CD4-positive, alpha-beta memory T cell (primary cell): ENCODE measurements at regions of chr6 and their contacts with region 1.

Region 1: GRCh38 chr6:157756708-157757429 is 66.2 kb upstream of the SNX9 start:
- DNase-seq: peak; percentile 74 to 80 (median 76)
- H3K4me3 ChIP-seq: no peak overlapping the region
- H3K4me3 Mint-ChIP-seq: peak overlapping the region in 5 of 8 donors; percentile 6 to 64 (median 39)
- H3K27ac ChIP-seq: no peak overlapping the region
- H3K27ac Mint-ChIP-seq: peak overlapping the region; percentile 11 to 88 (median 73)
- H3K4me1 ChIP-seq: peaks cover 43% of the 10 kb centered on the region
- H3K4me1 Mint-ChIP-seq: peaks cover 28 to 74% (median 40%) of the 10 kb centered on the region in 4 donors
- H3K27me3 ChIP-seq: peaks cover 5% of the 10 kb centered on the region
- H3K27me3 Mint-ChIP-seq: peaks cover 6 to 7% of the 10 kb centered on the region in 2 donors

Region 2: GRCh38 chr6:157211603-157212455 is 545.0 kb before region 1 on chr6:
- CTCF ChIA-PET with region 1: no interaction called
- POLR2A ChIA-PET with region 1: no interaction called
- intact Hi-C with region 1: no loop called
- DNase-seq: no peak
- H3K4me3 ChIP-seq: no peak overlapping the region
- H3K4me3 Mint-ChIP-seq: no peak overlapping the region
- H3K27ac ChIP-seq: no peak overlapping the region
- H3K27ac Mint-ChIP-seq: peak overlapping the region in 3 of 7 donors; percentile 37 to 84 (median 70)
- H3K4me1 ChIP-seq: no peaks in the 10 kb centered on the region
- H3K4me1 Mint-ChIP-seq: peaks cover 0 to 4% (median 0%) of the 10 kb centered on the region in 4 donors
- H3K27me3 ChIP-seq: no peaks in the 10 kb centered on the region
- H3K27me3 Mint-ChIP-seq: no peaks in the 10 kb centered on the region

Region 3: DNA sequence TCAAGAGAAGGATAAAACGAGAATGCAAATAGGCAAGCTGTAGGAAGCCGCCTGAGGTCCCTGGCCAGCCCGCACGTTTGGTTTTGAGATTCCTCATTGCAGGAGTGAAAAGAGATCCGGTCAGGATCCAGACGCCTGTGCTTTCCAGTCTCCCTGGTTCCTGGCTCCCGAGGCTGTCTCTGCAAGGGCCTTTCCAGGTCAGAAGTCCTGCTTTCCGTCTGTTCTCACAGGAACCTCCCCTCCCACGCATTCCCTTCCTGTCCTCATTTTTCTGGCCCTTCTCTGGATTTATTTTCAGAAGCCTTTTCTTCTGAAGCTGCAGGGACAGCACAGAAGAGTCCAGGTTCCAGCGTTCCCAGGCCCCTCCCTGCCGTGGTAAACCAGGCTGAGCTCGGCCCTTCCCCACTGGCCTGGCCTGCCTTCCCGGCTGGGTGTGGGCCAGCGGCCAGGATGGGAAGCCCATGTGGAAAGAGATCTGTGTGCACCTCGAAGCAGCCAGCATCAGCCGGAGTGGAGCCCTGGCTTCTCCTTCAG is 487.5 kb before region 1 on chr6:
- CTCF ChIA-PET with region 1: no interaction called
- POLR2A ChIA-PET with region 1: no interaction called
- intact Hi-C with region 1: no loop called
- DNase-seq: no peak
- H3K4me3 ChIP-seq: no peak overlapping the region
- H3K4me3 Mint-ChIP-seq: no peak overlapping the region
- H3K27ac ChIP-seq: no peak overlapping the region
- H3K27ac Mint-ChIP-seq: no peak overlapping the region
- H3K4me1 ChIP-seq: peaks cover 7% of the 10 kb centered on the region
- H3K4me1 Mint-ChIP-seq: peaks cover 2 to 14% (median 8%) of the 10 kb centered on the region in 4 donors
- H3K27me3 ChIP-seq: no peaks in the 10 kb centered on the region
- H3K27me3 Mint-ChIP-seq: peaks cover 0 to 3% of the 10 kb centered on the region in 2 donors

Region 4: DNA sequence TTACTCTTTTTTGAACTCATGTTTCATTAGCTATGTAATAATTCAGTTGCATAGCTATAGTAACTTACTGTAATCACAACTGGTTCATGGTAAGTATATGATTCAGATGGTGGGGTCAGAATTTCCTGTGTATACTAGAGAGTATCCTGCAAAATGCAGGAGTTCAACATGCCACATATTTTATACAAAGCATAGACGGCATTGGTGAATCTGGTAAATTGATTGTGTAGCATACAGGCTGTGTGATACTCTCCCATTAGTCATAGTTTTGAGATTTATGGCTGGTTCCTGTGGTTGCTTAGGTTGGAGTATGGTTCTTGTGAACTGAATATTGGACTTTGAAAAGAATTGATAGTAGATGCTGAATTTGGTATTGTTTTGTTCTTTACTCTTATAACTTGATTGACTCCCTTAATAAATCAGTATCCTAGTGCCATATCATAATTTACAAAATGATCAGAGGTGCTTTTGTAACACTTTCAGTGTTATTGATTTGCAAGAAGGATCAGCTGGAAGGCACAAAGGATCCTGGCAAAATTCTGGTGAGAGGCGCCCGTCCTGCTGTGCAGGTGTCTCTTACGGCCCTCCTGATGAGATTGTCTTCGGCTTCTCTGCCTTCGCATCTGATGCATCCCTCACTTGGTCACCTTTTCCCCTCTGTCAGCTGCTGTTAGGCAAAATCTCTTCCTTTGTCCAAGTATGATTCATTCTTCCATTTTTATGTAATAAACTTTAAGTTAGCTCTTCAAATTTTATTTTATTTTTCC is 88.8 kb after region 1 on chr6:
- CTCF ChIA-PET with region 1: interaction called, 22 read pairs
- POLR2A ChIA-PET with region 1: no interaction called
- intact Hi-C with region 1: no loop called
- DNase-seq: no peak
- H3K4me3 ChIP-seq: no peak overlapping the region
- H3K4me3 Mint-ChIP-seq: peak overlapping the region in 2 of 8 donors; percentile 8 to 23
- H3K27ac ChIP-seq: no peak overlapping the region
- H3K27ac Mint-ChIP-seq: peak overlapping the region in 2 of 7 donors; percentile 18 to 38
- H3K4me1 ChIP-seq: peaks cover 19% of the 10 kb centered on the region
- H3K4me1 Mint-ChIP-seq: peaks cover 35 to 75% (median 56%) of the 10 kb centered on the region in 4 donors
- H3K27me3 ChIP-seq: no peaks in the 10 kb centered on the region
- H3K27me3 Mint-ChIP-seq: no peaks in the 10 kb centered on the region

Region 5: DNA sequence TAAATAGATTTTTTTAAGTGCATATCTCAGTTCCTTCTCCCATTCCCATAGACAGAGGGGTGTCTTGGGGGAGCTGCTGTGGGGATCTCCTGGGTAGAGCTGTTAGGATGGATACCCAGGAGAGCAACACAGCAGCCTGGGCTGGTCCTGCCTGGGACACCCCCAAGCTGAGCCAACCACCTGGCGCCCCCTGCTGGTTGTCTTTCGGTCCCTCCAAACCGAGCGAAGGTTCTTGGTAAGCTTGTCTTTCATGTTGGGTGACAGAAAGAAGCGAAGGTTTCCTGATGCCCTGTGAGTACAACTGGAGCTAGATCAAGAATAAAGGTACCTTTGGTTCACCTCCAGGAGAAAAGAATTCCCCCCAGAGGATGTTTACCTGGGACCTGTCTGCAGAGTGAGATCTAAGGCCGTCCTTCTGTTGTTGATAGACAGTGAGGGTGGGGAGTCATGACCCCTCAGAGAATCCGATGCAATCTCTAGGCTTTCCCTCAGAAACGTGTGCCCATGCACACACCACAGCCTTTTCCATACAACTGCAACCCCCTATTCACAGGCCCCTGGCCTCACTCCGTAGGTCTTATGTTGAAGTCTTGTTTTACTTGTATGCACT is 117.0 kb after region 1 on chr6:
- CTCF ChIA-PET with region 1: interaction called, 314 read pairs
- POLR2A ChIA-PET with region 1: interaction called, 17 read pairs
- intact Hi-C with region 1: loop called (anchors 1 kb)
- DNase-seq: peak; percentile 72 to 76 (median 75)
- H3K4me3 ChIP-seq: no peak overlapping the region
- H3K4me3 Mint-ChIP-seq: peak overlapping the region in 1 of 8 donors; percentile 40
- H3K27ac ChIP-seq: no peak overlapping the region
- H3K27ac Mint-ChIP-seq: peak overlapping the region in 5 of 7 donors; percentile 65 to 77 (median 75)
- H3K4me1 ChIP-seq: peaks cover 9% of the 10 kb centered on the region
- H3K4me1 Mint-ChIP-seq: peaks cover 6 to 21% (median 12%) of the 10 kb centered on the region in 4 donors
- H3K27me3 ChIP-seq: no peaks in the 10 kb centered on the region
- H3K27me3 Mint-ChIP-seq: no peaks in the 10 kb centered on the region

Region 6: GRCh38 chr6:157946865-157947532 is 190.1 kb after region 1 on chr6:
- CTCF ChIA-PET with region 1: interaction called, 19 read pairs
- POLR2A ChIA-PET with region 1: no interaction called
- intact Hi-C with region 1: no loop called
- DNase-seq: peak in 2 of 5 donors; percentile 11 to 14
- H3K4me3 ChIP-seq: no peak overlapping the region
- H3K4me3 Mint-ChIP-seq: no peak overlapping the region
- H3K27ac ChIP-seq: no peak overlapping the region
- H3K27ac Mint-ChIP-seq: peak overlapping the region in 2 of 7 donors; percentile 48 to 71
- H3K4me1 ChIP-seq: no peaks in the 10 kb centered on the region
- H3K4me1 Mint-ChIP-seq: no peaks in the 10 kb centered on the region
- H3K27me3 ChIP-seq: no peaks in the 10 kb centered on the region
- H3K27me3 Mint-ChIP-seq: peaks cover 0 to 1% of the 10 kb centered on the region in 2 donors

Region 7: GRCh38 chr6:158072083-158072721 is 315.3 kb after region 1 on chr6:
- CTCF ChIA-PET with region 1: interaction called, 38 read pairs
- POLR2A ChIA-PET with region 1: no interaction called
- intact Hi-C with region 1: loop called (anchors 1 kb)
- DNase-seq: peak; percentile 56 to 59 (median 57)
- H3K4me3 ChIP-seq: no peak overlapping the region
- H3K4me3 Mint-ChIP-seq: no peak overlapping the region
- H3K27ac ChIP-seq: no peak overlapping the region
- H3K27ac Mint-ChIP-seq: peak overlapping the region in 5 of 7 donors; percentile 10 to 93 (median 87)
- H3K4me1 ChIP-seq: peaks cover 9% of the 10 kb centered on the region
- H3K4me1 Mint-ChIP-seq: peaks cover 9 to 25% (median 16%) of the 10 kb centered on the region in 4 donors
- H3K27me3 ChIP-seq: no peaks in the 10 kb centered on the region
- H3K27me3 Mint-ChIP-seq: no peaks in the 10 kb centered on the region

Region 8: DNA sequence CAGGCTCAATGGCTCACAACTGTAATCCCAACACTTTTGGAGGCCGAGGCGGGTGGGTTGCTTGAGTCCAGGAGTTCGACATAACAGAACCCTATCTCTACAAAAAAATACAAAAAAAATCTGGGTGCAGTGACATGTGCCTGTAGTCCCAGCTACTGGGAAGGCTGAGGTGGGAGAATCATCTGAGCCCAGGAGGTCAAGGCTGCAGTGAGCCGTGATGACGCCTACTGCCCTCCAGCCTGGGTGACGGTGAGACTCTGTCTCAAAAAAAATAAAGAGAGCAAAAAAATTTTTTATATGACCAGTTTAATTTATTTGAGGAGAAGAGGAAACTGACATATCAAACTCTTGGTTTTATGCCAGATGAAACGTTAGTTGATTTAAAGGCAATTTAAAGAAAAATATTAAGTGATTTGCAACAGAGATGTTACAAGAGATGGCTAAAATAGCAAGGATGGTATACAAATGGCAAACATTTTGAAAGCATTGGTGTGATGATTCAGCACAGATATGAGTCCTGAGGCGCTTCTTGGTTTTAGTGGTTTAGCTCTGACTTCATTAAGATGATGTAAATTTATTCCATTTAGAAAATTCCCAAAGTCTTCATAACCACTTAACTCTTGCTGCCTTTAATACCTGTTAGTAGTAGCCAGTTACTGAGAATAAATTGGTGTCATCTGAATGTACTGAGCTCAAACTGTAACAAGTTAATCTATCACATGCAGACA is 429.0 kb after region 1 on chr6:
- CTCF ChIA-PET with region 1: no interaction called
- POLR2A ChIA-PET with region 1: no interaction called
- intact Hi-C with region 1: no loop called
- DNase-seq: no peak
- H3K4me3 ChIP-seq: no peak overlapping the region
- H3K4me3 Mint-ChIP-seq: no peak overlapping the region
- H3K27ac ChIP-seq: no peak overlapping the region
- H3K27ac Mint-ChIP-seq: no peak overlapping the region
- H3K4me1 ChIP-seq: peaks cover 5% of the 10 kb centered on the region
- H3K4me1 Mint-ChIP-seq: peaks cover 18 to 30% (median 18%) of the 10 kb centered on the region in 4 donors
- H3K27me3 ChIP-seq: no peaks in the 10 kb centered on the region
- H3K27me3 Mint-ChIP-seq: no peaks in the 10 kb centered on the region